ENCODE measurements at regions of chr4 and their contacts with region 1.

Region 1: DNA sequence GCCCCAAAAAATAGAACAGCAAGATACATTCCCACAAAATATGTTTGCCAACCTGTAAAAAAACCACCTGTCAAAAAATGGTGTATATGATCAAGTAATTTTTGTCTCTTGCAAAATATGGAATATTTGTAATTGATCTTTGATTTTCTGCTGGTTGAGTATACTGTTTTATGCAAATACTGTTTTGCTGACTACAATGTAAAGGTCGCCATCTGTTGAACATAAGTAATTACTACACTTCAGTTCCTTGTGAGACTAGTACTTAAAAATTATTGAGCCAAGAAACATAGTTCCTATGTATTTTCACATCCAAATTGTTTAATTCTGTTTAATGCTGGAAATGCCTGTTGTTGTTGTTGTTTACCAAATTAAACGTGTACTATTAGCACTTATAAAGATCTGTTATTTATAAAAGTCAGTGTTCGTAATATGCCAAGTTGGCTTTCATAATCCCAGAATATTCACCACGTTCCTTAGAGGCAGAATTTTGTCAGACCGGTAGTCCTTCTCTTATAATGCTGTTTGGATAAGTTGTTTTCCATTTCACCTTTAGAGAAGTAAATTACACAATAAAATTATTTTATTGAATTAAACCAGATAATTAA is 144.2 kb downstream of the PDLIM5 start:
- DNase-seq: peak in 1 of 2 donors; percentile 61
- ATAC-seq: peak in 2 of 3 donors; percentile 53 to 63
- H3K4me3 ChIP-seq: no peak overlapping the region
- H3K4me3 Mint-ChIP-seq: no peak overlapping the region
- H3K27ac ChIP-seq: no peak overlapping the region
- H3K27ac Mint-ChIP-seq: no peak overlapping the region
- H3K4me1 ChIP-seq: no peaks in the 10 kb centered on the region
- H3K4me1 Mint-ChIP-seq: peaks cover 0 to 5% of the 10 kb centered on the region in 2 donors
- H3K27me3 ChIP-seq: no peaks in the 10 kb centered on the region
- H3K27me3 Mint-ChIP-seq: no peaks in the 10 kb centered on the region
- CTCF ChIP-seq: peak; percentile 79

Region 2: GRCh38 chr4:94304365-94304971 is 291.5 kb before region 1 on chr4:
- intact Hi-C with region 1: loop called (anchors 2 kb)
- DNase-seq: peak in 1 of 2 donors; percentile 50
- ATAC-seq: peak in 1 of 3 donors; percentile 25
- H3K4me3 ChIP-seq: no peak overlapping the region
- H3K4me3 Mint-ChIP-seq: no peak overlapping the region
- H3K27ac ChIP-seq: no peak overlapping the region
- H3K27ac Mint-ChIP-seq: no peak overlapping the region
- H3K4me1 ChIP-seq: no peaks in the 10 kb centered on the region
- H3K4me1 Mint-ChIP-seq: no peaks in the 10 kb centered on the region
- H3K27me3 ChIP-seq: no peaks in the 10 kb centered on the region
- H3K27me3 Mint-ChIP-seq: no peaks in the 10 kb centered on the region
- CTCF ChIP-seq: no peak

Region 3: DNA sequence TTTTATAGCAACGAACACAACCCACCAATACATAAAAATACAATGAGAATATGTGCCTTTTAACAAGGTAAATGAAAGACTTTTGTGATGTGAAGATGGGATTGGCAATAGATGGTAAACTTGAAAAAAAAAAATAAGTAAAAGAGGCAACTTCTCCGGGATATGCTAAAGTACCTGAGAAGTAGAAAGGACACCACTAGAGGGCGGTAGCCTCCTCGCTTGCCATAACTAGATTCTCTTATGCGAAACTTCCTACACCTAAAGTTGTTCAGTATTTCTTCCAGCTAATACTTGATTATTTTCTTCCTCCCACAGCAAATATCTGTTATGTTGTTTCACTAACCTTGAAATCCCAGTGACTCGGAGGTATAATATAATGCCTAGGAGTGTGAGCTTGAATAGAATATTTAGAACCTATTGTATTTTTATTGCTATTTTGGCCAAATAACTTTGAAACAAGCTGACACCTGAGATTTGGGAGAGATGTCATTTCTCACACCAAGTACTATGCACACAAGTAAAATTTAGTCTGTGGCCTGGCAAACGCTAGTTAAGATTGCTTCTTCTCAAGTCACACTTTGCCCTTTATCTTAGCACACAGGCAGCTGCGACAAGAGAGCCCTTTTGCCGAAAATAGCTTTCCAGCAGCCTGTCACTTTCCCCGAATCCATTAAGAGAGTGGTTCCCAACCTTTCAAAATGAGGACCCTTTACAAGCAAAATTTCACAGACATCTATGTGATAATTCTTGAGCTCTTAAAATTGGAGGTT is 189.1 kb before region 1 on chr4:
- intact Hi-C with region 1: loop called (anchors 1 kb)
- DNase-seq: peak; percentile 22 to 86
- ATAC-seq: peak; percentile 64 to 85 (median 79)
- H3K4me3 ChIP-seq: no peak overlapping the region
- H3K4me3 Mint-ChIP-seq: no peak overlapping the region
- H3K27ac ChIP-seq: no peak overlapping the region
- H3K27ac Mint-ChIP-seq: no peak overlapping the region
- H3K4me1 ChIP-seq: no peaks in the 10 kb centered on the region
- H3K4me1 Mint-ChIP-seq: no peaks in the 10 kb centered on the region
- H3K27me3 ChIP-seq: no peaks in the 10 kb centered on the region
- H3K27me3 Mint-ChIP-seq: peaks cover 3 to 12% of the 10 kb centered on the region in 2 donors
- CTCF ChIP-seq: peak; percentile 91

Region 4: GRCh38 chr4:94690851-94691254 is 94.9 kb after region 1 on chr4:
- intact Hi-C with region 1: no loop called
- DNase-seq: no peak
- ATAC-seq: no peak
- H3K4me3 ChIP-seq: no peak overlapping the region
- H3K4me3 Mint-ChIP-seq: no peak overlapping the region
- H3K27ac ChIP-seq: no peak overlapping the region
- H3K27ac Mint-ChIP-seq: no peak overlapping the region
- H3K4me1 ChIP-seq: no peaks in the 10 kb centered on the region
- H3K4me1 Mint-ChIP-seq: no peaks in the 10 kb centered on the region
- H3K27me3 ChIP-seq: no peaks in the 10 kb centered on the region
- H3K27me3 Mint-ChIP-seq: peaks cover 0 to 3% of the 10 kb centered on the region in 2 donors
- CTCF ChIP-seq: no peak